ENCODE measurements at regions of chrX and their contacts with region 1.

Region 1: DNA sequence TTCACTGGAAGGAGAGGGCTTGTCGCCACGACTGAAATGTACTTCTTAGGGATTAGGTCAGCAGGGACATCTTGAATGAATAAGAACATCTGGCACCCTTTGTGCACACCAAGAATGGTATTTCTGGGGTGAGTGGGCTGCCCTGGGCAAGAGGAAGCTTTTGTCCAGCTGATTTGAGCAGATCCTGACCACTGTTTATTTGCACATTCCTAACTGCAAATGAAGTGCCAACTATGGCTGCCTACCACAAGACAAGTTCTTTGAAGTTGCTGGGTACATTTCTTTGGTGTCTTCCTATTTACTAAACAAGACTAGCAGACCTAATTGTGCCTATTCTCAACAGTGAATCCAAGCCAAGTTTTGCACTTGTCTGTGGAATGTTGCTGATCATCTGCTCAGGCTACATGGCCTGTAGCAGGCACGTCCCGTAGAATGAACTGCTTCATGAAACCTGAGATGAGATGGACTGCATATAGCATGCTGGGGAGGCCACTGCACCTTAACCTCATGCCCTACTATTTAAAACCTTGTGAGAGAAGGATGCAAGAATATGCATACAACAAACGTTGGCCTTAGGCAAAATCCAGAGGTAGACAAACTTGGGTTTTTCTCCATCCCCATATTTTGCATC is 45.0 kb downstream of the PIR start:
- DNase-seq: no peak
- ATAC-seq: no peak

Region 2: GRCh38 chrX:15356444-15356843 is 91.7 kb before region 1 on chrX:
- intact Hi-C with region 1: loop called (anchors 10 kb)
- DNase-seq: no peak
- ATAC-seq: peak; percentile 68

Region 3: GRCh38 chrX:15524417-15524816 is 76.3 kb after region 1 on chrX:
- intact Hi-C with region 1: no loop called
- DNase-seq: no peak
- ATAC-seq: no peak

Region 4: GRCh38 chrX:15653961-15654360 is 205.8 kb after region 1 on chrX:
- intact Hi-C with region 1: no loop called
- DNase-seq: no peak
- ATAC-seq: no peak

Measured in left ventricle myocardium superior (tissue), 1 donor.